HAP-1 (cell line): ENCODE measurements at regions of chr11 and their contacts with region 1.

Region 1: GRCh38 chr11:35485656-35486322 is 39.6 kb downstream of the PAMR1 start:
- DNase-seq: peak; percentile 50 to 86
- H3K4me3 ChIP-seq: no peak overlapping the region
- H3K4me1 ChIP-seq: no peaks in the 10 kb centered on the region
- H3K27me3 ChIP-seq: no peaks in the 10 kb centered on the region

Region 2: DNA sequence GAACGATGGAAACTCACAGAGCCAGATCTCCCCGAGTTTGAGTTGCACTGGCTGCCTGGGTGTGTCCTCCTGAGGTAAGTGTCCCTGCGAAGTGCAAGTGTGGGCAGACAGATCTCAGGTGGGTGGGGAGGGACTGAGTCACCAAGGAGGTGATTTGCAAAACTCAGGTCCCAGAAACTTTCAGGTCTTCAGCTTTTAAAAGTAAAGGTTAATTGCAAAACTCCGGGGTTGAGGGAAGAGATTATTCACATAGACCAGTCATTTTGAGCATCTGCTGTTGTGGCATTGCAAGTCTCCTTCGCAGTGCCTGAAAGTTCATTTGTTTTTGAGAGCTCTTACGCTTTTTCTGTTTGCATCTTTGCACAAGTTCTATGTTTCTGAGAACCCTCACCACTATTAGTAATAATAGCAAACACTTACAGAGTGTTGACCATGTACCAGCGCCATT is 339.7 kb before region 1 on chr11:
- in situ Hi-C with region 1: no loop called
- DNase-seq: no peak
- H3K4me3 ChIP-seq: no peak overlapping the region
- H3K4me1 ChIP-seq: no peaks in the 10 kb centered on the region
- H3K27me3 ChIP-seq: no peaks in the 10 kb centered on the region

Region 3: GRCh38 chr11:35794850-35795249 is 309.1 kb after region 1 on chr11:
- in situ Hi-C with region 1: no loop called
- DNase-seq: no peak
- H3K4me3 ChIP-seq: no peak overlapping the region
- H3K4me1 ChIP-seq: no peaks in the 10 kb centered on the region
- H3K27me3 ChIP-seq: no peaks in the 10 kb centered on the region

Region 4: GRCh38 chr11:36492724-36493304 is 1007.0 kb after region 1 on chr11:
- in situ Hi-C with region 1: loop called (anchors 25 kb)
- DNase-seq: peak; percentile 41 to 51
- H3K4me3 ChIP-seq: no peak overlapping the region
- H3K4me1 ChIP-seq: no peaks in the 10 kb centered on the region
- H3K27me3 ChIP-seq: no peaks in the 10 kb centered on the region